ENCODE measurements at regions of chr15 and their contacts with region 1.

Region 1: GRCh38 chr15:57859130-57859685 is 152.7 kb downstream of the POLR2M start:
- DNase-seq: no peak
- H3K4me3 ChIP-seq: no peak overlapping the region
- CTCF ChIP-seq: no peak
- POLR2A ChIP-seq: no peak

Region 2: GRCh38 chr15:57375827-57376695 is 483.1 kb before region 1 on chr15 and contains the start of gene CGNL1:
- intact Hi-C with region 1: no loop called
- DNase-seq: no peak
- H3K4me3 ChIP-seq: peak within 1 kb of the TSS; percentile 29
- CTCF ChIP-seq: no peak
- POLR2A ChIP-seq: no peak
- total RNA-seq, gene CGNL1: 5.7 to 22.9 (median 14.5) TPM

Region 3: GRCh38 chr15:57559875-57560274 is 299.3 kb before region 1 on chr15:
- intact Hi-C with region 1: loop called (anchors 5 kb)
- DNase-seq: peak; percentile 56 to 94
- H3K4me3 ChIP-seq: no peak overlapping the region
- CTCF ChIP-seq: peak in 1 of 3 donors; percentile 24
- POLR2A ChIP-seq: no peak

Region 4: GRCh38 chr15:57806003-57806402 is 53.2 kb before region 1 on chr15:
- intact Hi-C with region 1: no loop called
- DNase-seq: no peak
- H3K4me3 ChIP-seq: no peak overlapping the region
- CTCF ChIP-seq: no peak
- POLR2A ChIP-seq: no peak

Region 5: GRCh38 chr15:57820119-57820518 is 39.1 kb before region 1 on chr15:
- intact Hi-C with region 1: no loop called
- DNase-seq: no peak
- H3K4me3 ChIP-seq: no peak overlapping the region
- CTCF ChIP-seq: no peak
- POLR2A ChIP-seq: no peak

Region 6: DNA sequence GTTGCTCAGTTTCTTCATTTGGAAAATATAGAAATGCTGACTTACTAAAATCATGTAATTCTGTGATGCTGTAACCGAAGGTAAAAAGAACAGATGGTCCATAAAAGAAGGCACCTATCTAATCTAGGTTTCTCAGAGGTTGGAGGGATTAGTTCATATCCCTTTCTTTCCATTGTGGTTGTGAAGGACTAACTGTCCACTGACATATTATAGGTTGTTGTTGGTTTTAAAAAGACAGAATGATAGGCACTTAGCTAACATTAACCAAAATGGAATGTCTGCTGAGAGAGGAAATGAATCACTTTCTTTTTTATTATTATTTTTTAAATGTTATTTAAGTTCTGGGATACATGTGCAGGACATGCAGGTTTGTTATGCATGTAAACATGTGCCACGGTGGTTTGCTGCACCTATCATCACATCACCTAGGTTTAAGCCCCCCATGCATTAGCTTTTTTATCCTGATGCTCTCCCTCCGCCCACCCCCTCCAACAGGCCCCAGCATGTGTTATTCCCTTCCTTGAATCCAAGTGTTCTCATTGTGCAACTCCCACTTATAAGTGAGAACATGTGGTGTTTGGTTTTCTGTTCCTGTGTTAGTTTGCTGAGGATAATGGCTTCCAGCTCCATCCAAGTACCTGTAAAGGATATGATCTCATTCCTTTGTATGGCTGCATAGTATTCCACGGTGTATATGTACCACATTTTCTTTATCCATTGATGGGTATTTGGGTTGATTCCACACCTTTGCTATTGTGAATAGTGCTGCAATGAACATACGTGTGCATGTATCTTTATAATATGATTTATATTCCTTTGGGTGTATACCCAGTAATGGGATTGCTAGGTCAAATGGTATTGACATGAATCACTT is 160.5 kb after region 1 on chr15:
- intact Hi-C with region 1: no loop called
- DNase-seq: no peak
- H3K4me3 ChIP-seq: no peak overlapping the region
- CTCF ChIP-seq: no peak
- POLR2A ChIP-seq: no peak